PC-3 (cell line): ENCODE measurements at regions of chr2 and their contacts with region 1.

Region 1: GRCh38 chr2:182077451-182078142 is 91.9 kb downstream of the PPP1R1C start:
- DNase-seq: peak; percentile 95
- ATAC-seq: peak; percentile 82
- H3K4me3 ChIP-seq: peak overlapping the region; percentile 35; the same call in 1 of the 2 replicates
- H3K27ac ChIP-seq: peak overlapping the region; percentile 78
- H3K4me1 ChIP-seq: peaks cover 47% of the 10 kb centered on the region
- H3K27me3 ChIP-seq: no peaks in the 10 kb centered on the region
- CTCF ChIP-seq: peak; percentile 85

Region 2: DNA sequence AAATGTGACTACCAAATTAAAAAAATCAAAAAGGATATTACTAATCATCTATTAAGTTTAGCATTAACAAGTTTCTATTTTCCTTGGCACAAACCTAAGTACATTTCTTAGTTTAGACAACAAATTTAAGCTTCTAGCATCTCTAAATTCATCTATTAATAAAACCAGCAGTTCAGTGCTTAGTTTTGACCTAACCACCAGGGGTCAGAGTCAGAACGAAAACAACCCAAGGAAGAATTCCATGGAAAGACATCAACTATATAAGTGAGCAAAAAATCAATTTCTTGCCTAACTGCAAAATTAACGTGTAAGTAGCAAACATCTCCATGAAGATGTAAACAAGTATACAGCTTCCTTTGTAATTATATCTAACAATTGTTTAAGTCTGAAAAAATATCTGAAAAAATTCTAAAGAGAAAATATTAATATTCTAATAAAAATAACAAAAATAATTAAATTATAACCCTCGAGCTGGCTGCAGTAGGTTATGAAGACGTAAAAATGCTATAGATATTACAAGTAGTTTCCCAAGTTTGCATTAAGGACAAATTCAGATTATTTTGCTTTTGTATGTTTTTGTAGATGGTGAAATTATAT is 504.4 kb before region 1 on chr2:
- CTCF ChIA-PET with region 1: no interaction called
- POLR2A ChIA-PET with region 1: no interaction called
- intact Hi-C with region 1: loop called (anchors 5 kb)
- DNase-seq: peak; percentile 65
- ATAC-seq: no peak; the same call in 1 of the 2 replicates
- H3K4me3 ChIP-seq: no peak overlapping the region
- H3K27ac ChIP-seq: no peak overlapping the region
- H3K4me1 ChIP-seq: 0 out of 2 replicates have a peak, but pooled peaks cover 7% of the 10 kb centered on the region
- H3K27me3 ChIP-seq: no peaks in the 10 kb centered on the region
- CTCF ChIP-seq: peak; percentile 75

Region 3: DNA sequence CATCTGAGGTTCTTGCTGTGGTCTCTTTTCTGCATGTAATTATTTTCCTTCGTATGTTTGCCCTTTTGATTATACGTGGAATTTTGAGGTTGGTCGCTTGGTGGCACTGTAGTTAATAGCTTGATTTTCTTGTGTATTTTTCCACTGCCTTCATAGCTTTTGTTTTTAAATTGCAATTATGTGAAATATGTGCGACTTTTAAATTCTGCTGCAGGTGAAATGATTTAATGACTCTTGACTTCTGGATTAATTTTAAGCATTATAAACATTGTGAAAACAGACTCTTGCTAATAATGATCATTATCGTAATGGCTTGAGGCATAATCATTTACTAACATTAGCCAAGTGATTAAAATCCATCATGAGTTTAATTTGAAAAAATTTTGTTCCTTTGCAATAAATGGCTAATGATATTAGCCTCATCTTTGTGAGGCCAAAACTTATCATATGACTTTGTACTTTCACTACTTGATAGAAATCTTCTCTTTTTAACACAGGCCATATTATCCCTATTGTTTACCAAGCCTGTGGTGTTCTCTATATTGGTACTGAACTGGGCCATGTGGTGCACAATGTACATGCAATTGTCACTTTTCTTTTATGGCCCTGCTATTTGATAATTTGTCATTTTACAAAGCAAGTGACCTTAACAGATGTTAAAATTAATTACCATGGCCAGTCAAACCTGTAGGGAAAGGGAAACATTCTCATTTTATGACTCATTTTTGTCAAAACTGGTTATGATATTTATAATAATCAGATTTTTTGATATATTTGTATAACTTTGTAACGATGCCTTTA is 334.5 kb before region 1 on chr2:
- CTCF ChIA-PET with region 1: interaction called, 3 read pairs
- POLR2A ChIA-PET with region 1: no interaction called
- intact Hi-C with region 1: loop called (anchors 1 kb)
- DNase-seq: peak; percentile 74
- ATAC-seq: peak; percentile 47
- H3K4me3 ChIP-seq: 0 out of 2 replicates have a peak overlapping the region, but pooled peaks have one; percentile 18
- H3K27ac ChIP-seq: peak overlapping the region; percentile 69
- H3K4me1 ChIP-seq: peaks cover 29% of the 10 kb centered on the region
- H3K27me3 ChIP-seq: no peaks in the 10 kb centered on the region
- CTCF ChIP-seq: peak; percentile 89

Region 4: DNA sequence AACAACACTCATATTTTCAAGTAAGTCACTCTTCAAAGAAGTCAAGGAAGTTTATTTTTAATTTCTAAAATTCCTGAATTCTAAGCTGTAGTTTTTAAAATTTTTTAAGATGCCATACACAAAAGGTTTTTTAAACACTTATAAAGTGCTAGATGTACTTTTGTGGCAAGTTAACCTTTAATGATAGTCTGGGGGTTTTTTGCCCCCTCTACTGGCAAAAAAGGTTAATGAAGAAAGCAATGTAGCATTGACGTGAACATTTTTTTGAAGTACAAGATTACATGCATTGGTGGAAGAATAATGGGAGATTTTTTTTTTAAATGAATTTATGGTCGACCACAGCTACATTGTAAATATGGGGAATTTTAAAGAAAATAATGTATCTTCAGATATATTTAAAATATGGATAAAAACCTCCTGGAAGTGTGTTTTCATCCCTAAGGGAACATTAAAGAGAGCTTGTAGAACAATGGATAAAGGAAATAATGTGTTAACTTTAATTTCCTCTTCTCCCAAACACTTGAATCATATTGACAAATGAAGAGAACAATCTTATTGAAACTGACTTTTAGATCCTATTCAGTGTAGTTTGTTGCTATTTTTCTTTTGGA is 173.5 kb before region 1 on chr2:
- CTCF ChIA-PET with region 1: no interaction called
- POLR2A ChIA-PET with region 1: no interaction called
- intact Hi-C with region 1: loop called (anchors 2 kb)
- DNase-seq: peak; percentile 70
- ATAC-seq: 0 out of 2 replicates have a peak, but pooled peaks have one; percentile 43
- H3K4me3 ChIP-seq: no peak overlapping the region
- H3K27ac ChIP-seq: no peak overlapping the region
- H3K4me1 ChIP-seq: peaks cover 15% of the 10 kb centered on the region
- H3K27me3 ChIP-seq: no peaks in the 10 kb centered on the region
- CTCF ChIP-seq: peak; percentile 80

Region 5: GRCh38 chr2:182101263-182101662 is 23.7 kb after region 1 on chr2:
- CTCF ChIA-PET with region 1: no interaction called
- POLR2A ChIA-PET with region 1: no interaction called
- intact Hi-C with region 1: no loop called
- DNase-seq: peak; percentile 43
- ATAC-seq: peak; percentile 42; the same call in 1 of the 2 replicates
- H3K4me3 ChIP-seq: no peak overlapping the region
- H3K27ac ChIP-seq: no peak overlapping the region
- H3K4me1 ChIP-seq: no peaks in the 10 kb centered on the region
- H3K27me3 ChIP-seq: no peaks in the 10 kb centered on the region
- CTCF ChIP-seq: peak; percentile 56

Region 6: DNA sequence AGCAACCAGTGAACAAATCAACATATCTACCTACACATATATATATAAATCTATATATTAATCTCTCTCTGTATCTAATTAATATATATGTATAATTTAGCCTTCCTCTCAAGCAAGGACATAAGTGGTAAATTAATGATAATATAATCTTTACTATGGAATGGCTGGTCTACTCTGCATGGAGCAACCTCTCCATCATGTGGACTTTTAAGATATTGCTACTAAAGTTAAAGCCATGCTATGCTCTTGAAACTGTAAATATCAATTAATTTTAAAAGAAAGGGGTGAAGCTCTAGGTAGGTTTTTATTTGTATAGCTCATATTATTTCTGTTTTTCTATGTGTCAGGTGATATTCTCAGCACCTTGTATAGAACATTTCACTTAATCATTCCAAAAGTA is 55.0 kb after region 1 on chr2:
- CTCF ChIA-PET with region 1: interaction called, 4 read pairs
- POLR2A ChIA-PET with region 1: no interaction called
- intact Hi-C with region 1: loop called (anchors 5 kb)
- DNase-seq: peak; percentile 29
- ATAC-seq: peak; percentile 71
- H3K4me3 ChIP-seq: no peak overlapping the region
- H3K27ac ChIP-seq: no peak overlapping the region
- H3K4me1 ChIP-seq: peaks cover 11% of the 10 kb centered on the region
- H3K27me3 ChIP-seq: no peaks in the 10 kb centered on the region
- CTCF ChIP-seq: peak; percentile 54

Region 7: GRCh38 chr2:182447863-182448262 is 370.3 kb after region 1 on chr2:
- CTCF ChIA-PET with region 1: no interaction called
- POLR2A ChIA-PET with region 1: no interaction called
- intact Hi-C with region 1: no loop called
- DNase-seq: no peak
- ATAC-seq: no peak
- H3K4me3 ChIP-seq: no peak overlapping the region
- H3K27ac ChIP-seq: no peak overlapping the region
- H3K4me1 ChIP-seq: no peaks in the 10 kb centered on the region
- H3K27me3 ChIP-seq: peaks cover 14% of the 10 kb centered on the region; the same call in 1 of the 2 replicates
- CTCF ChIP-seq: no peak